ENCODE measurements at regions of chr7 and their contacts with region 1.

Region 1: GRCh38 chr7:127717502-127718339 is 65.7 kb downstream of the SND1 start:
- DNase-seq: no peak
- ATAC-seq: no peak
- H3K4me3 ChIP-seq: no peak overlapping the region
- H3K4me3 Mint-ChIP-seq: peak overlapping the region in 1 of 10 donors; percentile 10
- H3K27ac ChIP-seq: no peak overlapping the region
- H3K27ac Mint-ChIP-seq: peak overlapping the region in 2 of 9 donors; percentile 11 to 36
- H3K4me1 ChIP-seq: no peaks in the 10 kb centered on the region
- H3K4me1 Mint-ChIP-seq: peaks cover 6 to 28% (median 19%) of the 10 kb centered on the region in 7 donors
- H3K27me3 ChIP-seq: no peaks in the 10 kb centered on the region
- H3K27me3 Mint-ChIP-seq: no peaks in the 10 kb centered on the region

Region 2: GRCh38 chr7:127736511-127736910 is 18.8 kb after region 1 on chr7:
- CTCF ChIA-PET with region 1: no interaction called
- POLR2A ChIA-PET with region 1: no interaction called
- intact Hi-C with region 1: loop called in 1 of 2 experiments (anchors 2 kb)
- DNase-seq: no peak
- ATAC-seq: no peak
- H3K4me3 ChIP-seq: no peak overlapping the region
- H3K4me3 Mint-ChIP-seq: no peak overlapping the region
- H3K27ac ChIP-seq: no peak overlapping the region
- H3K27ac Mint-ChIP-seq: no peak overlapping the region
- H3K4me1 ChIP-seq: no peaks in the 10 kb centered on the region
- H3K4me1 Mint-ChIP-seq: peaks cover 3 to 29% (median 17%) of the 10 kb centered on the region in 7 donors
- H3K27me3 ChIP-seq: no peaks in the 10 kb centered on the region
- H3K27me3 Mint-ChIP-seq: no peaks in the 10 kb centered on the region

Region 3: GRCh38 chr7:127809261-127809702 is 91.6 kb after region 1 on chr7:
- CTCF ChIA-PET with region 1: no interaction called
- POLR2A ChIA-PET with region 1: no interaction called
- intact Hi-C with region 1: no loop called
- DNase-seq: no peak
- ATAC-seq: no peak
- H3K4me3 ChIP-seq: no peak overlapping the region
- H3K4me3 Mint-ChIP-seq: no peak overlapping the region
- H3K27ac ChIP-seq: no peak overlapping the region
- H3K27ac Mint-ChIP-seq: no peak overlapping the region
- H3K4me1 ChIP-seq: no peaks in the 10 kb centered on the region
- H3K4me1 Mint-ChIP-seq: peaks cover 8 to 40% (median 15%) of the 10 kb centered on the region in 7 donors
- H3K27me3 ChIP-seq: no peaks in the 10 kb centered on the region
- H3K27me3 Mint-ChIP-seq: no peaks in the 10 kb centered on the region